Dorsolateral prefrontal cortex (tissue), 120 donors: ENCODE measurements at regions of chr20 and their contacts with region 1.

Region 1: GRCh38 chr20:47886460-47887041 is 101.3 kb upstream of the SULF2 start:
- DNase-seq: peak in 1 of 10 donors; percentile 10
- H3K4me3 ChIP-seq: no peak overlapping the region
- H3K27ac ChIP-seq: no peak overlapping the region
- H3K27me3 ChIP-seq: peaks cover 0 to 9% (median 0%) of the 10 kb centered on the region in 45 donors
- CTCF ChIP-seq: no peak

Region 2: GRCh38 chr20:47847868-47848531 is 38.6 kb before region 1 on chr20:
- intact Hi-C with region 1: loop called in 1 of 2 experiments (anchors 10 kb)
- DNase-seq: peak in 3 of 10 donors; percentile 17 to 49 (median 35)
- H3K4me3 ChIP-seq: no peak overlapping the region
- H3K27ac ChIP-seq: no peak overlapping the region
- H3K27me3 ChIP-seq: peaks cover 0 to 9% (median 0%) of the 10 kb centered on the region in 45 donors
- CTCF ChIP-seq: no peak

Region 3: DNA sequence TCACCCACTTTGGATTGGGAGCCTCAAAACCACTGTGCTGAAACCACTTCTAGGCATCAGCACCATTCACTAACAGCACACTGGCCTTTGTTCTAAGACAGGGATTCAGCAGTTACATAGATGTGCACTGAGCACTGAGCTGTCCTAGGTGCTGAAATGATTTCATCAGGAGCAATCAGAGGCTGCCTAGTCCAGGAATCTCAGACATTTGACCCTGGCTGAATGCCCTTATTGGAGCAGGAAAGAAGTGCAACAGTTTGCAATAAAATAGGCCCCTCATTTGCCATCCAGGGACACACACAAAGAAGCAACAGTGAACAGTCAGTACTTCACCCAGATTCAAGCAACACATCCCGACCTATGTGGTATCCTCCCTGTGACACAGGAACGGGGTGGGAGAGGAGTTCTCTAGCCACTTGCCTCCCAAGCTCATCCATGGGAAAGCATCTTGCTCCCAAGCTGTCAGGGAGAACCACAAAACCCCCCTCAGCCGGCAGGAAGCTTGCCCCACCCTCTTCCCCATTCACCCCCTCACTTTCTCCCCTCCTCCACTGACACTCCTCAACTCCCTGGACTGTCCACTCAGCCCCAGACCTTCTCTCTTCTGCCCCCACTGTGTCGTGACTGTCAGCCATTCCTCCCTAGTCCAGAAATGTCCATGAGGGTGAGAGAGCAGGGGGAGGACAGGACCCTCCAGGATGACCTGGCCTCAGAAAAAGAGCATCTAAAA is 636.8 kb after region 1 on chr20:
- intact Hi-C with region 1: loop called in 1 of 2 experiments (anchors 5 kb)
- DNase-seq: no peak
- H3K4me3 ChIP-seq: no peak overlapping the region
- H3K27ac ChIP-seq: no peak overlapping the region
- H3K27me3 ChIP-seq: peaks cover 0 to 21% (median 0%) of the 10 kb centered on the region in 45 donors
- CTCF ChIP-seq: no peak